HCT116 (cell line): ENCODE measurements at regions of chr10 and their contacts with region 1.

Region 1: GRCh38 chr10:95363303-95363912 is 72.6 kb upstream of the PDLIM1 start:
- DNase-seq: peak; percentile 61
- ATAC-seq: peak; percentile 84
- H3K4me3 ChIP-seq: no peak overlapping the region
- H3K27ac ChIP-seq: no peak overlapping the region
- H3K4me1 ChIP-seq: no peaks in the 10 kb centered on the region; a peak in 1 of 4 replicates
- H3K27me3 ChIP-seq: no peaks in the 10 kb centered on the region
- CTCF ChIP-seq: peak; percentile 75 to 96 (median 89)
- POLR2A ChIP-seq: no peak
- RAD21 ChIP-seq: peak; percentile 98

Region 2: GRCh38 chr10:95133016-95133752 is 230.2 kb before region 1 on chr10:
- CTCF ChIA-PET with region 1: interaction called, 3 read pairs
- POLR2A ChIA-PET with region 1: no interaction called
- RAD21 ChIA-PET with region 1: no interaction called
- intact Hi-C with region 1: loop called (anchors 1 kb)
- DNase-seq: peak; percentile 82
- ATAC-seq: peak; percentile 96
- H3K4me3 ChIP-seq: no peak overlapping the region
- H3K27ac ChIP-seq: no peak overlapping the region
- H3K4me1 ChIP-seq: no peaks in the 10 kb centered on the region
- H3K27me3 ChIP-seq: no peaks in the 10 kb centered on the region
- CTCF ChIP-seq: peak; percentile 68 to 88 (median 77)
- POLR2A ChIP-seq: no peak
- RAD21 ChIP-seq: peak; percentile 87

Region 3: DNA sequence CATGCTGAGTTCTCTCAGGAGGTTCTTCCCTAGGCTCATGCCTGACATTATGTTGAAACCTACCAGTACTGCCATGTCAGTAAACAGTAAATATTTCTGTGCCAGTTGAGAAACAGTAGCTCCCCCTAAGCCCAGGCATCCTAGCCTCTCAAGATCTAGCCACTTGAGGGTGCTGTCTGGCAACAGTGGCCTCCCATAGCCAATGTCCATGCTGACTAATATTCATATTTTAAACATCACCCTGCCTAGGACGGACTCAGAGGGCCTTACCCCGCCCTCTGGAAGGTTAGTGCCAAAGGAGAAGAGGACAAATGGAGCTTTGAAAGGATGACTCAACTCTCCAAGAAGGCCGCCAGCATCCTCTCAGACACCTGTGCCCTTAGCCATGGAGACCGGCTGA is 161.7 kb before region 1 on chr10:
- CTCF ChIA-PET with region 1: interaction called, 25 read pairs
- POLR2A ChIA-PET with region 1: no interaction called
- RAD21 ChIA-PET with region 1: interaction called in 1 of 2 experiments, 4 read pairs
- intact Hi-C with region 1: loop called (anchors 2 kb)
- DNase-seq: peak; percentile 46
- ATAC-seq: peak; percentile 100
- H3K4me3 ChIP-seq: no peak overlapping the region
- H3K27ac ChIP-seq: no peak overlapping the region
- H3K4me1 ChIP-seq: peaks cover 0 to 2% of the 10 kb centered on the region in 2 experiments; a peak in 1 of 4 replicates
- H3K27me3 ChIP-seq: no peaks in the 10 kb centered on the region
- CTCF ChIP-seq: peak; percentile 73 to 84 (median 74)
- POLR2A ChIP-seq: no peak
- RAD21 ChIP-seq: peak; percentile 86

Region 4: DNA sequence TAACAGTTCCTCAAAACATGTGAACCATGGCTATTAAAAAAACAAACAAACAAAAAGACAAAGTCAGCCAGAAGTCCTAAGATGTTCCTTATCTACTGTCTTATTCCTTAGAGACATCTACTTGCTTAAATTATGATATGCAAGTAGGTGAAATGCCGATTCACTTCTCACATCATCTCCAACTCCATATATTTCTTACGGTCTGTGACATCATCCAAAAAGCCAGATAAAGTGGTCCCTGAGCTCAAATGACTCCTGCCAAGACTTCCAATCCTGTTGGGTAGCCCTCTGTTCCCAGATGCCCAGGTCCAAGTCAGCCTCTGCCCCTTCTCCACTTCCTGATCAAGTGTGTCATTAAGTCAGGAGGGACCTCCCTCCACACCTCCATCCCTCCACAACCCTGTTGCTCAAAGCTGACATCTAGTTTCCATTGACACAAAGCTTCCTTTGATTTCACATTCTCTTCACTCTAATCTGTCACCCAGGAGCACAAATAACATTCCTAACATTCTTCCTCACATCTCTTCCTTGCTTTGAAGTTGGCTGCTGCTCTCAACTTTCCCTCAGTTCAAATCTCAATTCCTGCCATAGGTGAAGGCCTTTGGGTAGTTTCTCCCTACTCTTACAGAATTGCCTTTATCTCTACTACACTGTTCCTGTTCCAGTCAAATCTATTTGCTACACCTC is 16.6 kb before region 1 on chr10:
- CTCF ChIA-PET with region 1: interaction called, 16 read pairs
- POLR2A ChIA-PET with region 1: no interaction called
- RAD21 ChIA-PET with region 1: no interaction called
- intact Hi-C with region 1: no loop called
- DNase-seq: peak; percentile 24
- ATAC-seq: peak; percentile 85
- H3K4me3 ChIP-seq: no peak overlapping the region
- H3K27ac ChIP-seq: no peak overlapping the region
- H3K4me1 ChIP-seq: peaks cover 0 to 18% of the 10 kb centered on the region in 2 experiments; a peak in 2 of 4 replicates
- H3K27me3 ChIP-seq: no peaks in the 10 kb centered on the region
- CTCF ChIP-seq: no peak
- POLR2A ChIP-seq: no peak
- RAD21 ChIP-seq: no peak